ENCODE measurements at regions of chr12 and their contacts with region 1.

Region 1: GRCh38 chr12:31629756-31630732 is 29.4 kb upstream of the ETFBKMT start:
- DNase-seq: peak in 3 of 4 experiments; percentile 17 to 84 (median 58)
- ATAC-seq: peak; percentile 91
- H3K4me3 ChIP-seq: no peak overlapping the region
- H3K27ac ChIP-seq: peak overlapping the region; percentile 21; the same call in 1 of the 3 replicates
- H3K4me1 ChIP-seq: peaks cover 0 to 10% of the 10 kb centered on the region in 2 experiments; a peak in 4 of 5 replicates
- H3K27me3 ChIP-seq: no peaks in the 10 kb centered on the region
- CTCF ChIP-seq: no peak
- EP300 ChIP-seq: peak; percentile 61; the same call in 1 of the 2 replicates
- POLR2A ChIP-seq: no peak
- RAD21 ChIP-seq: no peak

Region 2: DNA sequence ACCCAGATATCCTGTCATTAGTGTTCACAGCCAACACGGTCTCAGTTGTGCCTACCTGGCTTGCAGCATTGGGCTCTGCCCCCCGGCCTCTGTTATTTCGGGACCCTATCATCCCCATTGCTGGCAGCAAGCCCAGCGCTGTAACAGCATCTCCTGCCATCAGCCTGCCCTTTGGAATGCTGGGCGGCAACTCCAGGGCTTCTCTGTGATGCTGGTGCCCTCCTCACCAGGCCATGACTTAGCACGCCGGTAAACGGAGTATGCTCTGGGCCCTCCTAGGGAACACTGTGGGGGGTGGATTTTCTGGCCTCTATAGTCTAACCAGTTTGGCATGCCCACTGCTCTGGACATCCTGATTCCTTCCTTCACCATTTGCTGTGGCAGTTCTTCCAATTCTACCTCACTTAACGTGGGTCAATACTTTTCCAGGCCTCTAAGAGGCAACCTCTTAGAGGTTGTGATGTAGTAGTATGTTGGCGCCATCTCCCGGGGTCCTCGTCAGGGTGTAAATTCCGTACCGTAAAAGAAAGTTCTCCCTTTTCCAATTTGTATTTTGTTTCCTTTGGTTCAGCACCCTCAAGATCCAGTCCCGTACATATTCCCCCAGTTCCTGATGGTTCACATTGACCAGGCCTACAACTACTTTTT is 384.1 kb before region 1 on chr12:
- CTCF ChIA-PET with region 1: no interaction called
- POLR2A ChIA-PET with region 1: no interaction called
- in situ Hi-C with region 1: loop called (anchors 5 kb)
- intact Hi-C with region 1: loop called (anchors 5 kb)
- DNase-seq: peak; percentile 33 to 62 (median 42)
- ATAC-seq: peak; percentile 94
- H3K4me3 ChIP-seq: no peak overlapping the region
- H3K27ac ChIP-seq: no peak overlapping the region
- H3K4me1 ChIP-seq: no peaks in the 10 kb centered on the region
- H3K27me3 ChIP-seq: peaks cover 23 to 30% of the 10 kb centered on the region in 2 experiments
- CTCF ChIP-seq: peak; percentile 76 to 98 (median 96)
- EP300 ChIP-seq: no peak
- POLR2A ChIP-seq: no peak
- RAD21 ChIP-seq: peak; percentile 51 to 83; a peak in 3 of 4 replicates

Region 3: DNA sequence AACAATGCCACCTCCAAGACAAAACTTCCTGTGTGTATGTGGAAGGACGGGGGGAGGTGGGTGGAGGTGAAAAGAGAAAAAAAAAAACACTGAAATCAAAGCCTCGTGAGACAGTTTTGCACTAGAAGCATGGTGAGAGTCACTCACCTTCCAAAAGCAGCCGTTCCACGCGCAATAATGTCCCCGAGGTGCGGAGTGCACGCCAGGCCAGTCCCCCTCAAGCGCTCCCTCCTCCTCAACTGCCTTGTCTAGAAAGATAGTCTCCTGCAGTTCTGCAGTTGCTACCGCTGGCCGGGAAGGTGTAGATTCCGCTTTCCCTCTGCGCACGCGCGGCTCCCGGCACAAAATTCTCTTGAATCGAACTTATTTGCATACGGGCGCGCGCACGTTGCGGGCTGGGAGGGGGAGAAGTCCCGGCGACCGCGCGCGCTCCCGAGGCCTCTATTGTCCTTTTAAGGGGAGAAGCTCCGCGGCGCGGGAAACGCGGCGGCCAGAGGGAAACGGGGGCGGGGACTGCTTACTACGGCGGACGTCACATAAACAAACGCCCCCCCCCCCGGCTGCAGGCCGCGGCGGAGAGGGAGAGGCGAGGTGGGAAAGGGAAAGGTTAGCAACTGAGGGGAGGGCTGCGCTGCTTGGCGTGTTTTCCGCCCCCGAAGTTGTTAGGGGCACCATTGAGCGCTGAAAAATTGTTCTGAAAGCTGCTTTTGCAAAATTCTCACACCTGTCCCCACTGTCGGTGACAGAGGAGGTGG is 304.0 kb before region 1 on chr12 and contains the start of gene SINHCAF:
- CTCF ChIA-PET with region 1: no interaction called
- POLR2A ChIA-PET with region 1: no interaction called
- in situ Hi-C with region 1: no loop called
- intact Hi-C with region 1: loop called (anchors 10 kb)
- DNase-seq: peak; percentile 94 to 100 (median 95)
- ATAC-seq: peak; percentile 77
- H3K4me3 ChIP-seq: peak within 1 kb of the TSS; percentile 71
- H3K27ac ChIP-seq: peak within 1 kb of the TSS; percentile 88
- H3K4me1 ChIP-seq: peaks cover 19 to 20% of the 10 kb centered on the region in 2 experiments; a peak in 4 of 5 replicates
- H3K27me3 ChIP-seq: peaks cover 0 to 5% of the 10 kb centered on the region in 2 experiments; a peak in 2 of 5 replicates
- CTCF ChIP-seq: no peak
- EP300 ChIP-seq: peak; percentile 16
- POLR2A ChIP-seq: peak; percentile 98
- RAD21 ChIP-seq: no peak
- polyA plus RNA-seq, gene SINHCAF: 141 to 165 TPM

Region 4: DNA sequence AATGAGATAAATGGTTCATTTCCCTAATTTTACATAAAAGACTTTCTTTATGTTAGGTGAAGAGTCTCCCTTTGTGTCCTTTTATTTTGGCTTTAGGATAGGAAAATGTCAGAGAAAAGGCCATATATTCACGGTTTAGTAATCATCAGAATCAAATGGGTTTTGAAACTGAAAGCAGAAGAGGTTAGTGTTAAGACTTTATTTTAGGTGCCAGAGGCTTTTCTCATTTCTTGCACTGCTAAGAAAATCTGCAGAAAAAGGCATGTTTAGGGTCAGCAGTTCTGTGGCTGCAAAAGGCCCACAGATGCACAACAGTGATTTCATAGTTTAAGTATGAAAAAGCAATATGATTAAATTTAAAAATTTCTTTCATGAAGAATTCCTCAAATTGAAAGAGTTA is 223.7 kb before region 1 on chr12:
- CTCF ChIA-PET with region 1: interaction called, 41 read pairs
- POLR2A ChIA-PET with region 1: no interaction called
- in situ Hi-C with region 1: loop called (anchors 5 kb)
- intact Hi-C with region 1: no loop called
- DNase-seq: no peak
- ATAC-seq: no peak
- H3K4me3 ChIP-seq: no peak overlapping the region
- H3K27ac ChIP-seq: no peak overlapping the region
- H3K4me1 ChIP-seq: no peaks in the 10 kb centered on the region
- H3K27me3 ChIP-seq: peaks cover 0 to 5% of the 10 kb centered on the region in 2 experiments; a peak in 2 of 5 replicates
- CTCF ChIP-seq: no peak
- EP300 ChIP-seq: no peak
- POLR2A ChIP-seq: no peak
- RAD21 ChIP-seq: no peak

Region 5: GRCh38 chr12:31506515-31507306 is 123.3 kb before region 1 on chr12:
- CTCF ChIA-PET with region 1: no interaction called
- POLR2A ChIA-PET with region 1: no interaction called
- in situ Hi-C with region 1: no loop called
- intact Hi-C with region 1: loop called (anchors 10 kb)
- DNase-seq: no peak
- ATAC-seq: no peak
- H3K4me3 ChIP-seq: no peak overlapping the region
- H3K27ac ChIP-seq: no peak overlapping the region
- H3K4me1 ChIP-seq: no peaks in the 10 kb centered on the region
- H3K27me3 ChIP-seq: no peaks in the 10 kb centered on the region
- CTCF ChIP-seq: no peak
- EP300 ChIP-seq: no peak
- POLR2A ChIP-seq: no peak
- RAD21 ChIP-seq: no peak

Region 6: DNA sequence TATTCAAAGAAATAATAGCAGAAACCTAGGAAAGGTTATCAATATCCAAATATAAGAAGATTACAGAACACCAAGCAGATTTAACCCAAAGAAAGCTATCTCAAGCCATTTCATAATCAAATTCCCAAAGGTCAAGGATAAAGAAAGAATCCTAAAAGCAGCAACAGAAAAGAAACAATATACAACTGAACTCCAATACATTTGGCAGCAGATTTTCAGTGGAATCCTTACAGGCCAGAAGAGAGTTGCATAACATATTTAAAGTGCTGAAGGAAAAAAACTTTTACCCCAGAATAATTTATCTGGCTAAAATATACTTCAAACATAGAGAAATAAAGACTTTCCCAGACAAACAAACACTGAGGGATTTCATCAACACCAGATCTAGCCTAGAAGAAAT is 93.4 kb before region 1 on chr12:
- CTCF ChIA-PET with region 1: no interaction called
- POLR2A ChIA-PET with region 1: no interaction called
- in situ Hi-C with region 1: no loop called
- intact Hi-C with region 1: loop called (anchors 10 kb)
- DNase-seq: no peak
- ATAC-seq: no peak
- H3K4me3 ChIP-seq: no peak overlapping the region
- H3K27ac ChIP-seq: no peak overlapping the region
- H3K4me1 ChIP-seq: no peaks in the 10 kb centered on the region
- H3K27me3 ChIP-seq: no peaks in the 10 kb centered on the region
- CTCF ChIP-seq: no peak
- EP300 ChIP-seq: no peak
- POLR2A ChIP-seq: no peak
- RAD21 ChIP-seq: no peak

Region 7: GRCh38 chr12:31600252-31600651 is 29.8 kb before region 1 on chr12:
- CTCF ChIA-PET with region 1: no interaction called
- POLR2A ChIA-PET with region 1: no interaction called
- in situ Hi-C with region 1: no loop called
- intact Hi-C with region 1: loop called (anchors 2 kb)
- DNase-seq: peak in 1 of 4 experiments; percentile 24
- ATAC-seq: peak; percentile 74
- H3K4me3 ChIP-seq: no peak overlapping the region
- H3K27ac ChIP-seq: no peak overlapping the region
- H3K4me1 ChIP-seq: no peaks in the 10 kb centered on the region
- H3K27me3 ChIP-seq: peaks cover 0 to 4% of the 10 kb centered on the region in 2 experiments; a peak in 1 of 5 replicates
- CTCF ChIP-seq: peak in 2 of 3 experiments; percentile 22 to 23; a peak in 1 of 6 replicates
- EP300 ChIP-seq: no peak
- POLR2A ChIP-seq: no peak
- RAD21 ChIP-seq: peak in 1 of 2 experiments; percentile 37; a peak in 1 of 4 replicates

Region 8: DNA sequence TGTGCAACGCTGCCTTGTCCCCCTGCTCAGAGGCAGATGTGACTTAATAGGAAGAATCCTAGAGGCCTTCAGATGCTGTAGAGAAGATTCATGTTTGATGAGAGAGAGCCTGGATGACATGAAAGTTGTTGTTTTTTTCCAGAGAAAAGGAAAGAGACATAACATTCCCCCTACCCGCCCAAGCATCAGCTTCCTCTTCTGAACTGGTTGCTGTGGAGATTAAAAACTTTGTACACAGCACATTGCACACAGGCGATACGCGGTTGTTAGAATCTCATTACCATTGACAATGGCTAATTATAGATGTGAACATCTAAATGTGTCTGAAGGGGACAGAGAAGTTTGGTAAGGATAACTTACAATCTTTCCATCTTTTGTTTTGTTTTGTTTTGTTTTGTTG is 15.9 kb after region 1 on chr12:
- CTCF ChIA-PET with region 1: no interaction called
- POLR2A ChIA-PET with region 1: no interaction called
- in situ Hi-C with region 1: no loop called
- intact Hi-C with region 1: no loop called
- DNase-seq: no peak
- ATAC-seq: no peak
- H3K4me3 ChIP-seq: no peak overlapping the region
- H3K27ac ChIP-seq: no peak overlapping the region
- H3K4me1 ChIP-seq: no peaks in the 10 kb centered on the region; a peak in 1 of 5 replicates
- H3K27me3 ChIP-seq: peaks cover 2 to 10% of the 10 kb centered on the region in 2 experiments; a peak in 2 of 5 replicates
- CTCF ChIP-seq: no peak
- EP300 ChIP-seq: no peak
- POLR2A ChIP-seq: no peak
- RAD21 ChIP-seq: no peak